Activated CD8-positive, alpha-beta memory T cell treated with anti-CD3 and anti-CD28 coated beads, Interleukin-2, amount 10 ng/mL, durations not matched to agents 7 days and 5 days (primary cell): ENCODE measurements at regions of chr10 and their contacts with region 1.

Region 1: DNA sequence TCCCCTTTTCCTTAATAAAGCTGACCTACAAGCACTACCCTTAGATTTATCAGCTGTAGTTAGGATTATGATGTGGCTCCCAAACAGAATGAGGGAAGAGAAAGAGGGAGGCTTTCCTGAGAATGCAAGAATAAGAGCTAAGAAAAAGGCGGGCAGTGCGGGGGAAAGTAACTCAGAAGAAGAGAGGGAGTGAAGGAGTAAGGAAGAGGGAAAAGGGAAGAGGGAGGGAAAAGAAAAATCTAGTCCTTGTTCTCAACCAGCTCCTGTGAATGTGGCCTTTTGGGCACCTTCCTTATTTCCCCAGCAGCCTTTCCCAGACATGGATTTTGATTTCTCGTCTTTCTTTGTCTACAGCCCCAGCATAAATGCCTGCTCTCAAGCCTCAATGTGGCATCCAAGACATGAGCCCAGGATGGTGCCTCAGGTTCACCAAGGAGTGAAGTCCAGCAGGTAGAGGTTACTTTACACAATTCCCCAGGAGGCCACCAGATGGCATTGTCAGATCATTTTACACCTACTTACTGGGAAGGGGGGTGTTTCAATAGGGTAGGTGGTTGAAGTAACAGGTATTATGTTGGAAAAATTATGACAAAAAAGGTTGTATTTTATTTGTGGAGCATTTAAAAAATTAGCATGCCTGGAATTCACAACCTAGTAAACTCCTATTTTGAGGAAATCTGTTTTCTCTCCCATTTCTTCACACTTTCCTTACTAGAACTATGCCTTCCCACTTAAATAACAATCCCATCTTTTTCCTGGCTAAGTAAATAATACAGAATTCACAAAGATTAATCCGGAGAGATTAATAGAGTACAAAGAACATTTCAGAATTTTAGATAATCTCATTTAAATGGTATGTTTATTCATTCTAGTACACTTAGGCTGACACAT is 106.5 kb downstream of the HTR7 start:
- DNase-seq: peak; percentile 56
- ATAC-seq: peak; percentile 55
- H3K4me3 Mint-ChIP-seq: no peak overlapping the region
- H3K27ac Mint-ChIP-seq: no peak overlapping the region
- H3K4me1 Mint-ChIP-seq: no peaks in the 10 kb centered on the region
- H3K27me3 Mint-ChIP-seq: peaks cover 49% of the 10 kb centered on the region

Region 2: DNA sequence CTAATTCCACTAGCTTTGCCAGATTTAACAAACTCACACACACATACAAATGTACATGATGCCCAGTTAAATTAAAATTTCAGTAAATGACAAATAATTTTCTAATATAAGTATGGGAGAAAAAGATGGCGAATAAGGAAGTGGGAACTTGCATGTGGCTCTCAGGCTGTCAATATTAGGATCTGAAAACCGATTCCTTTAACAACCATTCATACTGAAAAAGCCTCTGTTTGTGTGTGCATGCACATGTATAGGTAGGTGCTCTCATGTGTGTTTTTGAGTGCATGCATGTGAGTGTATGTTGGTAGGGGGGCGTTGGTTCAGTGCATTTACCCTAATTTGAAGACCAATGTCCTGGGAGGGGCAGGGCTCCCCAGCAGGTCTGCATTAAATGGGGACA is 18.8 kb before region 1 on chr10:
- CTCF ChIA-PET with region 1: no interaction called
- DNase-seq: no peak
- ATAC-seq: no peak
- H3K4me3 Mint-ChIP-seq: no peak overlapping the region
- H3K27ac Mint-ChIP-seq: no peak overlapping the region
- H3K4me1 Mint-ChIP-seq: no peaks in the 10 kb centered on the region
- H3K27me3 Mint-ChIP-seq: peaks cover 11% of the 10 kb centered on the region

Region 3: GRCh38 chr10:90862908-90863514 is 111.7 kb after region 1 on chr10:
- CTCF ChIA-PET with region 1: interaction called, 18 read pairs
- DNase-seq: no peak
- ATAC-seq: no peak
- H3K4me3 Mint-ChIP-seq: no peak overlapping the region
- H3K27ac Mint-ChIP-seq: no peak overlapping the region
- H3K4me1 Mint-ChIP-seq: peaks cover 3% of the 10 kb centered on the region
- H3K27me3 Mint-ChIP-seq: peaks cover 81% of the 10 kb centered on the region

Region 4: DNA sequence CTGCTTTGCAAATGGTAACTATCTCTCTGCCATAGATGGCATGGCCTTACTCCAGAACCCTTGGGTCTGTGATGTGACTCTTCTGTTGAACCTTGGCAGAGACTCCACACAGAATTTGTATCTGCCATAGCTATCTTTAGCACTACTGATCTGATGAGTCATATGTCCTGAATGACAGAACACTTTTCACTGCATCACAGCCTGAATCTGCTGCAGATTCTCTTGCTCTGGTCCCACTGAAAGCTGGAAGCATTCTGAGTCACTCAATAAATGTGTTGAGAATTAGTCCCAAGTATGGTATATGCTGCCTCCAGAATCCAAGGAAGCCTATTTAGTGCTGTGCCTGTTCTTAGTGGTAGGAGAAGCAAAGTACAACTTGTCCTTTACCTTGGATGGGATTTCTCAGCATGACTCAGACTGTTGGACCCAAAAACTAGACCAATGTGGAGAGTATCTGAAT is 209.0 kb after region 1 on chr10:
- CTCF ChIA-PET with region 1: no interaction called
- DNase-seq: no peak
- ATAC-seq: peak; percentile 63
- H3K4me3 Mint-ChIP-seq: no peak overlapping the region
- H3K27ac Mint-ChIP-seq: no peak overlapping the region
- H3K4me1 Mint-ChIP-seq: peaks cover 9% of the 10 kb centered on the region
- H3K27me3 Mint-ChIP-seq: peaks cover 3% of the 10 kb centered on the region